ENCODE measurements at regions of chr1 and their contacts with region 1.

Region 1: DNA sequence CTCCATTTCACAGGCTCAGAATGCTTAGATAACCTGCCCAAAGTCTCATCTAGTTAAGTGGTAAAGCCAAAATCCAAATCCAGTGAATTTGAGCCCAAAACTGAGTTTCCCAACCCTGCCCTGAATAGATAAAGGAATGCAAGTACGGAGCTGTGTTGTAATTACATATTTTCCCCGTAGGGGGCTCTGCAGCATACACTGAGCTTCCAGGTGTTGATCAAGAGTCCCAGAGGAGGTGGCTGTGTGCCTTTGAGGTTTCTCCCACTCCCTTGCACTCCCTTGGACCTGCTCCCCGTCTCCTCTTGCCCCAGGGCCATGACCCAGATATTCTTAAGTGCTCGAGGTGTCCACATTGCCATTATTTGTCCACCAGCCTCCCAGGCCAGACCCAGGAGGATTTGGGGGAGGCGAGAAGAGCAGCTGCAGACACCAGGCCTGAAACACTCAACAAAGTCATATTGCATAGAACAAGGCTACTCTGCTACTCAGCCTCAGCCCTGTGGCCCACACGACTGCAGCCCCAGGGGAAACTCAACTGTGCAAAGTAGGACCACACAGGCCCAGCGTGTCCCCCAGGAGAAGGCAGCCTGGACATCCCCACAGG is 18.4 kb upstream of the LY9 start:
- DNase-seq: peak; percentile 58
- H3K4me3 Mint-ChIP-seq: no peak overlapping the region
- H3K27ac Mint-ChIP-seq: no peak overlapping the region
- H3K4me1 Mint-ChIP-seq: peaks cover 38% of the 10 kb centered on the region
- H3K27me3 Mint-ChIP-seq: no peaks in the 10 kb centered on the region

Region 2: GRCh38 chr1:160726498-160727315 is 50.9 kb before region 1 on chr1:
- CTCF ChIA-PET with region 1: interaction called, 33 read pairs
- POLR2A ChIA-PET with region 1: no interaction called
- intact Hi-C with region 1: no loop called
- DNase-seq: peak; percentile 72
- H3K4me3 Mint-ChIP-seq: no peak overlapping the region
- H3K27ac Mint-ChIP-seq: no peak overlapping the region
- H3K4me1 Mint-ChIP-seq: peaks cover 24% of the 10 kb centered on the region
- H3K27me3 Mint-ChIP-seq: no peaks in the 10 kb centered on the region

Region 3: DNA sequence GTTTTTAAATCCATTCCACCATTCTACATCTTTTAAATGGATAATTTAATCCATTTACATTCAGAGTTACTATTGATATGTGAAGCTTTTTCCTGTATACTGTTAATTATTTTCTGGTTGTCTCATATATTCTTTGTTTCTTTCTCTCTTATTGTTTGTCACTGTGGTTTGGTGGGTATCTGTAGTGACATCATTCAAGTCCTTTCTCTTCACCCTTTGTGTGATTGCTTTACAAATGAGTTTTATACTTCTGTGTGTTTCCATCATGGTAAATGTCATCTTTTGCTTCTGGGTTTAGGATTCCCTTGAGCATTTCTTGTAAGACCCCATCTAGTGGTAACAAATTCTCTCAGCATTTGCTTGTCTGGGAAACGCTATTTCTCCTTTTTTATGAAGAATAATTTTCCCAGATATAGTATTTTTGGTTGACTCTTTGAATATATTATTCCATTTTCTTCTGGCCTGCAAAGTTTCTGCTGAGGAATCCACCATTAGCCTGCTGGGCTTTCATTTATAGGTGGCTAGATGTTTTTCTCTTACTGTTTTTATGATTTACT is 28.6 kb after region 1 on chr1:
- CTCF ChIA-PET with region 1: interaction called, 46 read pairs
- POLR2A ChIA-PET with region 1: no interaction called
- intact Hi-C with region 1: loop called (anchors 5 kb)
- DNase-seq: no peak
- H3K4me3 Mint-ChIP-seq: no peak overlapping the region
- H3K27ac Mint-ChIP-seq: peak overlapping the region; percentile 70
- H3K4me1 Mint-ChIP-seq: peaks cover 72% of the 10 kb centered on the region
- H3K27me3 Mint-ChIP-seq: no peaks in the 10 kb centered on the region

Region 4: DNA sequence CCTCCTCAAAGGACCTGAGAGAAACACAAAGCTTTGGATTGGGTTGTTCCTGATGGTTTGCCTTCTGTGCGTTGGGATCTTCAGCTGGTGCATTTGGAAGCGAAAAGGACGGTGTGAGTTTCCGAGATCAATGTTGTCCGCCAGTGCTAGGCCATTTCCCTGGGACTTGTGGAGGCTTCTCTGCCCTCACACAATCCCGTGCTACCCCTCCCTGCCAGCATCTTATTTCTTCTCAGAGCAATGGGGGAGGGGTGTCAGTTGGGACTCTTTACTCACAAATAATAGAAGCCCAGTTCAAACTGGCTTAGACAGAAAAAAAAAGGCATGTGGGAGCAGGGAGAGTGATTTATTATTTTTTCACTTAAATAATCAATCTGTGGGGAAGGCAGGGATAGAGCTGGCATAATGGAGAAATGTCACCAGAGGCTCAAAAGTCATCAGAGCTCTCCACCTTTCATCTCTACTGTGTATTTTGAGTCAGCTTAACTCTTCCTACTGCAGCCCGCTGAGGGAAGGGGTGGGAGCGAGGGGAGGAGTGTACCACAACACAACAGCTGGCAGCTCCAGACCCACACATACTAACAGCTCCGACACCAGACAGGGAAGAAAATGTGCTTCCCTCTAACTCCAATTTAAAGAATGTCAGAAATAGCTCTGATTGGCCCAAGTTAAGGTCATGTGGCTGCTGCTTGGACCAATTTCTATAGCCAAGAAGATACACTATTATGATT is 40.8 kb after region 1 on chr1:
- CTCF ChIA-PET with region 1: interaction called, 18 read pairs
- POLR2A ChIA-PET with region 1: no interaction called
- intact Hi-C with region 1: loop called (anchors 5 kb)
- DNase-seq: no peak
- H3K4me3 Mint-ChIP-seq: no peak overlapping the region
- H3K27ac Mint-ChIP-seq: no peak overlapping the region
- H3K4me1 Mint-ChIP-seq: peaks cover 4% of the 10 kb centered on the region
- H3K27me3 Mint-ChIP-seq: no peaks in the 10 kb centered on the region

Region 5: DNA sequence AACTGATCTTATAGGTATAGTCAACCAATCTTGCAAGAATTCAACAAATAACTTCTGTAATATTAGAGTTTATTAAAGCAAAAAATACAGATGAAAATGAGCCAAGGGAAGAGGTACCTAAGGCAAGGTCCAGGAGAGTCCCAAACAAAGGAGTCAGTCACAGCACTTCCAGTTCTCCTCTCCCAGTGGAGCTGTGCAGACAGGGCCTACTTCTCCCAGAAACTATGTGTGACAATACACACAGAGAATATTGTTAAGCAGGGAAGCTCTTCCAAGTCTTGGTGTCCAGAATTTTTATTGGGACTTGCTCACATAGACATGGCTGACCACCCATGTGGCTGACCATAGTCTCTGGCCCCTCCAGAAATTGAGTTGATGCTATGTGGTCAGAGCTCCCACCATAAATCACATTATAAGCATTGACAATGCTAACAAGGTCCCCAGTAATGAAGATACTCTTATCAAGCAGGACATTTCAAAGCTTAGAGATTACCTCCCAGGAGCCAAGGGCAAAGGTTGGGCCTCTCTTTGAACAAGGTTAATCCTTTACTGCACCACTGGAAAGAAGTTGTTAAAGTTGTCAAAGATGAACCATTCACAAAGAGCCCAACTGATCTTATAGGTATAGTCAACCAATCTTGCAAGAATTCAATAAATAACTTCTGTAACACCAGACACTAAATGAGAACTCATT is 88.6 kb after region 1 on chr1:
- CTCF ChIA-PET with region 1: no interaction called
- POLR2A ChIA-PET with region 1: no interaction called
- intact Hi-C with region 1: no loop called
- DNase-seq: no peak
- H3K4me3 Mint-ChIP-seq: no peak overlapping the region
- H3K27ac Mint-ChIP-seq: no peak overlapping the region
- H3K4me1 Mint-ChIP-seq: peaks cover 19% of the 10 kb centered on the region
- H3K27me3 Mint-ChIP-seq: peaks cover 2% of the 10 kb centered on the region

Region 6: GRCh38 chr1:160877221-160877620 is 99.6 kb after region 1 on chr1:
- CTCF ChIA-PET with region 1: interaction called, 16 read pairs
- POLR2A ChIA-PET with region 1: no interaction called
- intact Hi-C with region 1: loop called (anchors 5 kb)
- DNase-seq: no peak
- H3K4me3 Mint-ChIP-seq: no peak overlapping the region
- H3K27ac Mint-ChIP-seq: no peak overlapping the region
- H3K4me1 Mint-ChIP-seq: peaks cover 15% of the 10 kb centered on the region
- H3K27me3 Mint-ChIP-seq: no peaks in the 10 kb centered on the region